ENCODE measurements at regions of chr7 and their contacts with region 1.

Region 1: DNA sequence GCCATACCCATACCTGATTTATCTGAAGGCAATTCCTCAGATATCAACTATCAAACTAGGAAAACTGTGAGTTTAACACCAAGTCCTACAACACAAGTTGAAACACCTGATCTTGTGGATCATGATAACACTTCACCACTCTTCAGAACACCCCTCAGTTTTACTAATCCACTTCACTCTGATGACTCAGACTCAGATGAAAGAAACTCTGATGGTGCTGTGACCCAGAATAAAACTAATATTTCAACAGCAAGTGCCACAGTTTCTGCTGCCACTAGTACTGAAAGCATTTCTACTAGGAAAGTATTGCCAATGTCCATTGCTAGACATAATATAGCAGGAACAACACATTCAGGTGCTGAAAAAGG is 69.0 kb upstream of the RSBN1L start:
- DNase-seq: no peak
- H3K4me3 ChIP-seq: no peak overlapping the region
- H3K27ac ChIP-seq: peak overlapping the region; percentile 52
- H3K4me1 ChIP-seq: no peaks in the 10 kb centered on the region
- H3K27me3 ChIP-seq: no peaks in the 10 kb centered on the region
- CTCF ChIP-seq: no peak

Region 2: GRCh38 chr7:77467408-77467807 is 159.9 kb before region 1 on chr7:
- CTCF ChIA-PET with region 1: interaction called, 10 read pairs
- POLR2A ChIA-PET with region 1: no interaction called
- intact Hi-C with region 1: no loop called
- DNase-seq: no peak
- H3K4me3 ChIP-seq: no peak overlapping the region
- H3K27ac ChIP-seq: no peak overlapping the region
- H3K4me1 ChIP-seq: peaks cover 7% of the 10 kb centered on the region
- H3K27me3 ChIP-seq: no peaks in the 10 kb centered on the region
- CTCF ChIP-seq: no peak

Region 3: GRCh38 chr7:77587272-77587671 is 40.0 kb before region 1 on chr7:
- CTCF ChIA-PET with region 1: no interaction called
- POLR2A ChIA-PET with region 1: no interaction called
- intact Hi-C with region 1: loop called (anchors 5 kb)
- DNase-seq: no peak
- H3K4me3 ChIP-seq: no peak overlapping the region
- H3K27ac ChIP-seq: no peak overlapping the region
- H3K4me1 ChIP-seq: no peaks in the 10 kb centered on the region
- H3K27me3 ChIP-seq: no peaks in the 10 kb centered on the region
- CTCF ChIP-seq: no peak

Region 4: GRCh38 chr7:78090616-78091015 is 463.3 kb after region 1 on chr7:
- CTCF ChIA-PET with region 1: no interaction called
- POLR2A ChIA-PET with region 1: no interaction called
- intact Hi-C with region 1: no loop called
- DNase-seq: no peak
- H3K4me3 ChIP-seq: no peak overlapping the region
- H3K27ac ChIP-seq: no peak overlapping the region
- H3K4me1 ChIP-seq: no peaks in the 10 kb centered on the region
- H3K27me3 ChIP-seq: peaks cover 5% of the 10 kb centered on the region; the same call in 1 of the 2 replicates
- CTCF ChIP-seq: no peak

Measured in PC-9 (cell line).